ENCODE measurements at regions of chrX and their contacts with region 1.

Region 1: DNA sequence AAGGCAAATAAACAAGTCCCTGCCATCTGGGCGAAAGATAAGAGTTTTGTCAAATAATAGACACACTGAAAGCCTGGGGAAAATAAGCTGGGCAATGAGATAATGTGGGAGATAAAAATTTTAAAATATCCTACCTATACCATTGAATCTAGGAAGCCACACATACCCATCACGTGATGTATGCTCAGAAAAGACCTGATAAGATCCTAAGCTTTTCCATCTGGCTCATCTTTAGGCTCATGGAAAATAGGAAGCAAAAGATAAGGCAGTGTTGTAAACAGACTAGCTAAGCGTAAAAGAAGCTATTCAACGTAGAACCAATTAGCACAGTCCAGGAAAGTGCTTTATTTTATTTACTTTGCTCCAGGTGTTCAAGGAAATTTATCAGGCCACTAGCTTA is 103.6 kb downstream of the FAM47A start:
- DNase-seq: no peak
- H3K4me3 ChIP-seq: no peak overlapping the region
- CTCF ChIP-seq: no peak
- POLR2A ChIP-seq: no peak

Region 2: GRCh38 chrX:34053931-34054330 is 25.4 kb after region 1 on chrX:
- intact Hi-C with region 1: loop called (anchors 2 kb)
- DNase-seq: no peak
- H3K4me3 ChIP-seq: no peak overlapping the region
- CTCF ChIP-seq: no peak
- POLR2A ChIP-seq: no peak